Activated naive CD4-positive, alpha-beta T cell treated with anti-CD3 and anti-CD28 coated beads for 36 hours (primary cell): ENCODE measurements at regions of chrX and their contacts with region 1.

Region 1: DNA sequence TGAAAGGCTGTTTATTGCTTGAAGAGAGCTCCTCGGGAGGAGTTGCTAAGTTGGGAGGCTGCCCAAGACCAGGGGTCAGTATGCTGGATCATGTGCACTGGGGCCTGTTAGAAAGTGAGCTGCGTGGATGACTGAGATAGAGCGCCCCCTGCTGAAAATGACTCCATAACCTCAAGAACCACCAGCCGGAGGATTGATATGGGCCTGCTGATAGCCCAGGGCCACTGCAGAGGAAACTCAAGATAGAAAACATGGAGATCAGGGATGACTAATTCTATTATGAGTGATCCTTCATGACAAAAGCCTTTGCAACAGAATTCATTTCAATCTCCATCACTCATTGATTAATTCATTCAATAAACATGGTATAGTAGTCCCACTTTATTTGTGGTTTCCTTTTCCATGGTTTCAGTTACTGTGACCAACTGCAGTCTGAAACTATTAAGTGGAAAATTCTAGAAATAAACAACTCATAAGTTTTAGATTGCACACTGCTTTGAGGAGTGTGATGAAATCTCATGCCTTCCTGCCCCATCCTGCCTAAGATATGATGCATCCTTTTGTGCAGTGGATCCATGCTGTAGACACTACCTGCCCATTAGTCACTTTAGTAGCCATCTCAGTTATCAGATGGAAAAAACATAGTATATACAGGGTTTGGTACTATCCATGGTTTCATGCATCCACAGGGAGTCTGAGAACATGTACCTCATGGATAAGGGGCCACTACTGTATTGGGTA is 126.7 kb upstream of the MBNL3 start:
- DNase-seq: peak; percentile 60
- H3K4me3 Mint-ChIP-seq: no peak overlapping the region
- H3K27ac Mint-ChIP-seq: no peak overlapping the region
- H3K4me1 Mint-ChIP-seq: no peaks in the 10 kb centered on the region
- H3K27me3 Mint-ChIP-seq: no peaks in the 10 kb centered on the region

Region 2: DNA sequence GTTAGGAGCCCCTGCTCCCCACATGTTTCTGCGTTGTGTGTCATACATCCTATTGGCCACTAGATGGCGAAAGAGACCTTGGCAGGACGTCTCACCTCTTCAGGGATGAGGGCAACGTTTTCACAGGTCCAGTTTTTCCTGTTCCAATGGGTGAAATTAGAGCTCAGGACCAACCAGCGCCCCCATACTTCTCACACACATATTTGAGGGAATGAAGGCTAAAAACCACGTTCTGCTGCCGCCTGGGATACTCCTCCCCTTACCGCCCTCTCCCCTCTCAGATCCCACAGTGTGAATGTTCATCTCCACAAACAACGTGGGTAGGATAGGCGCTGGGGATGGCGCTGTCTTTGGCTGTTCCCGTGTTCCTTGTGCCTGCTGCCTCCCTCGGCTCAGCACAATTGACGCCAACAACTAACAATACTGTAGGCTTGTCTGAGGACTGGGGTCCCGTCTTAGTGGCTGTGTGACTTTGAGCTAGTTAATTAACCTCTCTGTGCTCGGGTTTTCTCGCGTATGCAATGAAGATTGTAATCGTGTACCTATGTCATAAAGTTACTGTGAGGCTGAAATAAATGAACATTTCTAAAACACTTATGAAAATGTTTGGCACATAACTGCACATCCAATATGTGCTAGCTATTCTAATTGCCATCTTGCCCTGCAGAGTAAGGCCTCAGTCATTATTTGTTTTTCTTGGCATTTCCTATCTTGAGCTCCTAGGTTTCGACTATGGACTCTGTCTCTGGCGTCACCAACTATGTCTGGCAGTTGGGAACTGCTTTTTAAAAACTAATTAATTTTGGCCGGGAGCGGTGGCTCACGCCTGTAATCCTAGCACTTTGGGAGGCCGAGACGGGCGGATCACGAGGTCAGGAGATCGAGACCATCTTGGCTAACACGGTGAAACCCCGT is 773.8 kb before region 1 on chrX:
- CTCF ChIA-PET with region 1: interaction called, 10 read pairs
- intact Hi-C with region 1: loop called (anchors 1 kb)
- DNase-seq: peak; percentile 25
- H3K4me3 Mint-ChIP-seq: no peak overlapping the region
- H3K27ac Mint-ChIP-seq: no peak overlapping the region
- H3K4me1 Mint-ChIP-seq: peaks cover 4% of the 10 kb centered on the region
- H3K27me3 Mint-ChIP-seq: no peaks in the 10 kb centered on the region

Region 3: GRCh38 chrX:132092439-132093065 is 523.0 kb before region 1 on chrX:
- CTCF ChIA-PET with region 1: interaction called, 4 read pairs
- intact Hi-C with region 1: loop called (anchors 1 kb)
- DNase-seq: peak; percentile 77
- H3K4me3 Mint-ChIP-seq: no peak overlapping the region
- H3K27ac Mint-ChIP-seq: no peak overlapping the region
- H3K4me1 Mint-ChIP-seq: no peaks in the 10 kb centered on the region
- H3K27me3 Mint-ChIP-seq: no peaks in the 10 kb centered on the region

Region 4: GRCh38 chrX:132226169-132226568 is 389.4 kb before region 1 on chrX:
- CTCF ChIA-PET with region 1: interaction called, 11 read pairs
- intact Hi-C with region 1: loop called (anchors 1 kb)
- DNase-seq: no peak
- H3K4me3 Mint-ChIP-seq: no peak overlapping the region
- H3K27ac Mint-ChIP-seq: no peak overlapping the region
- H3K4me1 Mint-ChIP-seq: peaks cover 12% of the 10 kb centered on the region
- H3K27me3 Mint-ChIP-seq: no peaks in the 10 kb centered on the region

Region 5: GRCh38 chrX:132631579-132632232 is 16.1 kb after region 1 on chrX:
- CTCF ChIA-PET with region 1: interaction called, 12 read pairs
- intact Hi-C with region 1: no loop called
- DNase-seq: no peak
- H3K4me3 Mint-ChIP-seq: no peak overlapping the region
- H3K27ac Mint-ChIP-seq: no peak overlapping the region
- H3K4me1 Mint-ChIP-seq: no peaks in the 10 kb centered on the region
- H3K27me3 Mint-ChIP-seq: no peaks in the 10 kb centered on the region

Region 6: GRCh38 chrX:132837126-132837525 is 221.6 kb after region 1 on chrX:
- CTCF ChIA-PET with region 1: no interaction called
- intact Hi-C with region 1: no loop called
- DNase-seq: no peak
- H3K4me3 Mint-ChIP-seq: no peak overlapping the region
- H3K27ac Mint-ChIP-seq: no peak overlapping the region
- H3K4me1 Mint-ChIP-seq: no peaks in the 10 kb centered on the region
- H3K27me3 Mint-ChIP-seq: no peaks in the 10 kb centered on the region

Region 7: GRCh38 chrX:133307637-133308500 is 692.3 kb after region 1 on chrX:
- CTCF ChIA-PET with region 1: no interaction called
- intact Hi-C with region 1: no loop called
- DNase-seq: no peak
- H3K4me3 Mint-ChIP-seq: no peak overlapping the region
- H3K27ac Mint-ChIP-seq: no peak overlapping the region
- H3K4me1 Mint-ChIP-seq: no peaks in the 10 kb centered on the region
- H3K27me3 Mint-ChIP-seq: peaks cover 8% of the 10 kb centered on the region